ENCODE measurements at regions of chr9 and their contacts with region 1.

Region 1: GRCh38 chr9:33076358-33077004 is at the start of gene SMU1:
- DNase-seq: peak; percentile 86
- ATAC-seq: peak; percentile 98
- H3K4me3 Mint-ChIP-seq: peak within 1 kb of the TSS; percentile 98
- H3K27ac Mint-ChIP-seq: peak within 1 kb of the TSS; percentile 99
- H3K4me1 Mint-ChIP-seq: peaks cover 26% of the 10 kb centered on the region
- H3K27me3 Mint-ChIP-seq: no peaks in the 10 kb centered on the region
- CTCF ChIP-seq: no peak
- total RNA-seq, gene SMU1: 26.8 and 28.1 TPM in 2 replicates

Region 2: DNA sequence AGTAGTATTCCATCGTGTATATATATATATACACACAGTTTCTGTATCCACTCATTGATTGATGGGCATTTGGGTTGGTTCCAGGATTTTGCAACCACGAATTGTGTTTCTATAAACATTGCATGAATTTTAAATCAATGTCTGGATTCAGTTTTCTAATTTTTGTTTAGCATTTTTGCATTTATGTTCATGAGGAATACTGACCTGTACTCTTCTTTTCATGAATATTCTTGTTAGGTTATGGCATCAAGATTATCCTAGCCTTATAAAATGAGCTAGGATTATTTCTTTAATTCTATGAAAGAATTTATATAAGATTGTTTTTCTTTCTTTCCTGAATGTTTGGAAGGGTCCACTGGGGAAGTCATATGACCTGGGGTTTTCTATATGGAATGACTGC is 328.5 kb before region 1 on chr9:
- CTCF ChIA-PET with region 1: no interaction called
- POLR2A ChIA-PET with region 1: no interaction called
- intact Hi-C with region 1: no loop called
- DNase-seq: no peak
- ATAC-seq: no peak
- H3K4me3 Mint-ChIP-seq: no peak overlapping the region
- H3K27ac Mint-ChIP-seq: no peak overlapping the region
- H3K4me1 Mint-ChIP-seq: no peaks in the 10 kb centered on the region
- H3K27me3 Mint-ChIP-seq: no peaks in the 10 kb centered on the region
- CTCF ChIP-seq: no peak

Region 3: GRCh38 chr9:33044127-33044673 is 32.3 kb before region 1 on chr9:
- CTCF ChIA-PET with region 1: no interaction called
- POLR2A ChIA-PET with region 1: interaction called, 4 read pairs
- intact Hi-C with region 1: loop called (anchors 5 kb)
- DNase-seq: peak; percentile 54
- ATAC-seq: peak; percentile 82
- H3K4me3 Mint-ChIP-seq: peak overlapping the region; percentile 83
- H3K27ac Mint-ChIP-seq: peak overlapping the region; percentile 50
- H3K4me1 Mint-ChIP-seq: peaks cover 16% of the 10 kb centered on the region
- H3K27me3 Mint-ChIP-seq: no peaks in the 10 kb centered on the region
- CTCF ChIP-seq: no peak

Region 4: GRCh38 chr9:33124751-33125381 is 48.4 kb after region 1 on chr9:
- CTCF ChIA-PET with region 1: interaction called, 9 read pairs
- POLR2A ChIA-PET with region 1: interaction called, 6 read pairs
- intact Hi-C with region 1: loop called (anchors 1 kb)
- DNase-seq: no peak
- ATAC-seq: peak; percentile 72
- H3K4me3 Mint-ChIP-seq: peak overlapping the region; percentile 74
- H3K27ac Mint-ChIP-seq: peak overlapping the region; percentile 96
- H3K4me1 Mint-ChIP-seq: peaks cover 88% of the 10 kb centered on the region
- H3K27me3 Mint-ChIP-seq: no peaks in the 10 kb centered on the region
- CTCF ChIP-seq: no peak

Region 5: GRCh38 chr9:33225319-33226149 is 149.1 kb after region 1 on chr9:
- CTCF ChIA-PET with region 1: interaction called, 49 read pairs
- POLR2A ChIA-PET with region 1: interaction called, 22 read pairs
- intact Hi-C with region 1: loop called (anchors 1 kb)
- DNase-seq: no peak
- ATAC-seq: peak; percentile 33
- H3K4me3 Mint-ChIP-seq: no peak overlapping the region
- H3K27ac Mint-ChIP-seq: peak overlapping the region; percentile 4
- H3K4me1 Mint-ChIP-seq: peaks cover 51% of the 10 kb centered on the region
- H3K27me3 Mint-ChIP-seq: no peaks in the 10 kb centered on the region
- CTCF ChIP-seq: no peak

Region 6: GRCh38 chr9:33535541-33535940 is 459.1 kb after region 1 on chr9:
- CTCF ChIA-PET with region 1: no interaction called
- POLR2A ChIA-PET with region 1: no interaction called
- intact Hi-C with region 1: no loop called
- DNase-seq: no peak
- ATAC-seq: no peak
- H3K4me3 Mint-ChIP-seq: no peak overlapping the region
- H3K27ac Mint-ChIP-seq: no peak overlapping the region
- H3K4me1 Mint-ChIP-seq: no peaks in the 10 kb centered on the region
- H3K27me3 Mint-ChIP-seq: peaks cover 2% of the 10 kb centered on the region
- CTCF ChIP-seq: no peak

Region 7: DNA sequence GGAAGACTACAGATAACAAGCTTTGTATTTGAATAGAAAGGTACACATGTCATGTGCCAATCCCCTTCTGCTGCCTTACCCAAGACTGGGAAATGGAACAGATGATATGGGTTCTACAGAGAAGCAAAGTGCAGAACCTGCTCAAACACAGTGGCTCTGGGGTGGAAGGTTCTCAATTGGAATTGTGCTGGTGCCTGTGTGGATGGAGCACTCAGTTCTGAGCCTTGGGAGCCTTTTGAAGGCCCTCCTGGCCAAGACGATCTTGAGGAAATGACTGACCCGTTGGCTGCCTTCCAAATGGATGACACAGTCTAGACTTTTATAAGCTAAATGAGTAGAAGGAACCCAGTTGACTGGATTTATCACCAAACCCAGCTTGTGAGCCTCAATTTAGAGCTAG is 714.6 kb after region 1 on chr9:
- CTCF ChIA-PET with region 1: no interaction called
- POLR2A ChIA-PET with region 1: no interaction called
- intact Hi-C with region 1: no loop called
- DNase-seq: no peak
- ATAC-seq: no peak
- H3K4me3 Mint-ChIP-seq: no peak overlapping the region
- H3K27ac Mint-ChIP-seq: no peak overlapping the region
- H3K4me1 Mint-ChIP-seq: no peaks in the 10 kb centered on the region
- H3K27me3 Mint-ChIP-seq: peaks cover 5% of the 10 kb centered on the region
- CTCF ChIP-seq: no peak